Pancreas (tissue), 10 donors: ENCODE measurements at regions of chr17 and their contacts with region 1.

Region 1: GRCh38 chr17:42517516-42517915 is 18.5 kb upstream of the NAGLU start:
- DNase-seq: peak in 5 of 6 donors; percentile 68 to 88 (median 77)
- ATAC-seq: peak; percentile 42 to 77 (median 72)
- H3K4me3 ChIP-seq: no peak overlapping the region
- H3K27ac ChIP-seq: peak overlapping the region in 2 of 4 donors; percentile 80 to 84
- H3K4me1 ChIP-seq: peaks cover 6 to 20% (median 8%) of the 10 kb centered on the region in 3 donors
- H3K27me3 ChIP-seq: no peaks in the 10 kb centered on the region
- CTCF ChIP-seq: peak; percentile 43 to 87 (median 80)

Region 2: GRCh38 chr17:42266918-42267778 is 250.4 kb before region 1 on chr17:
- intact Hi-C with region 1: no loop called
- DNase-seq: no peak
- ATAC-seq: peak in 1 of 4 donors; percentile 45
- H3K4me3 ChIP-seq: no peak overlapping the region
- H3K27ac ChIP-seq: no peak overlapping the region
- H3K4me1 ChIP-seq: no peaks in the 10 kb centered on the region
- H3K27me3 ChIP-seq: no peaks in the 10 kb centered on the region
- CTCF ChIP-seq: no peak

Region 3: GRCh38 chr17:42322382-42323267 is 194.9 kb before region 1 on chr17:
- intact Hi-C with region 1: loop called in 2 of 3 experiments (anchors 10 kb)
- DNase-seq: peak; percentile 84 to 95 (median 92)
- ATAC-seq: peak; percentile 92 to 97 (median 96)
- H3K4me3 ChIP-seq: no peak overlapping the region
- H3K27ac ChIP-seq: no peak overlapping the region
- H3K4me1 ChIP-seq: peaks cover 0 to 4% (median 0%) of the 10 kb centered on the region in 3 donors
- H3K27me3 ChIP-seq: no peaks in the 10 kb centered on the region
- CTCF ChIP-seq: peak; percentile 92 to 99 (median 99)

Region 4: DNA sequence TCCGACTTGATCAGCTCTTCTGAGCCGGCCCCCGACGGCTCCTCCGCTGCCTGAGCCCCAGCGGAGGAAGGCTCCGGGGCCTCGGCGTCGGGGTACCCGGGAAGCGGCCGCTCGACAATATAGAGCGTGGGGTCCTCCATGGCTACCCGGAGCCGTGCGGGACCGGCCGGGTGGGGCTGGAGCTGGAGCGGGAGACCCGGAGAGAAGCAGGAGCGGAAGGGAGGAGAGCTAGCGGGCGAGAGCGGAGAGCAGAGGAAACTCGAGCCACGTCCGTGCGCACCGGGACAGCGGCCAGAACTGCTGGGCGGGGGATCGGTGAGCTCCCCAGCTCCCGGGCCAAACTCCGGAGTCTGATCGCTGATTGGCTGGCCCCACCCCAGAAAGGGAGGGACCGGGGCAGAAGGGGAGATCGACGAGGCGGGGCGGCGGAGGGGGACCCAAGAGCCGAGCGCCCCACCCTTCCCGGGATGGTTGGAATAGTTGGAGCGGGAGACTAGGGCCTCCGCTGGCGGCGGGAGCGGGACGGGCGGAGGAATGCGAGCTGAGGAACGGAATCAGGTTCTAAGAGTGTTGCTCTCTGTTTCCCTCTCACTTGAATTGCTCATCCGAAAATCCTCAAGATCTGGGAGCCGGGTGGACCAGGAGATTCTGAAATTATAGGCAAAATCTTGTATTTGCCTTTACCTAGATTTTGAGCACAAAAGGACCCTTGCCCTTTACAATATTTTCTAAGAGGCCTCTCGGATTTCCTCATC is 94.4 kb before region 1 on chr17 and contains the start of gene CAVIN1:
- intact Hi-C with region 1: loop called in 2 of 3 experiments (anchors 5 kb)
- DNase-seq: peak; percentile 87 to 94 (median 91)
- ATAC-seq: peak; percentile 88 to 92 (median 88)
- H3K4me3 ChIP-seq: peak within 1 kb of the TSS; percentile 50 to 54 (median 51)
- H3K27ac ChIP-seq: peak within 1 kb of the TSS; percentile 11 to 57 (median 50)
- H3K4me1 ChIP-seq: no peaks in the 10 kb centered on the region
- H3K27me3 ChIP-seq: no peaks in the 10 kb centered on the region
- CTCF ChIP-seq: no peak
- total RNA-seq, gene CAVIN1: 11.5 to 42.6 (median 19.6) TPM

Region 5: GRCh38 chr17:42428141-42428944 is 89.2 kb before region 1 on chr17:
- intact Hi-C with region 1: loop called in 2 of 3 experiments (anchors 5 kb)
- DNase-seq: peak in 1 of 6 donors; percentile 50
- ATAC-seq: peak; percentile 68 to 85 (median 85)
- H3K4me3 ChIP-seq: no peak overlapping the region
- H3K27ac ChIP-seq: no peak overlapping the region
- H3K4me1 ChIP-seq: peaks cover 0 to 6% (median 6%) of the 10 kb centered on the region in 3 donors
- H3K27me3 ChIP-seq: no peaks in the 10 kb centered on the region
- CTCF ChIP-seq: peak; percentile 27 to 52 (median 38)